Heart left ventricle (tissue), 16 donors: ENCODE measurements at regions of chr6 and their contacts with region 1.

Region 1: GRCh38 chr6:27388293-27389197 is at the start of gene ZNF391:
- DNase-seq: peak; percentile 54 to 83 (median 79)
- ATAC-seq: peak; percentile 83 to 97 (median 96)
- H3K4me3 ChIP-seq: peak within 1 kb of the TSS; percentile 7 to 94 (median 69)
- H3K27ac ChIP-seq: peak within 1 kb of the TSS in 11 of 12 donors; percentile 13 to 81 (median 67)
- H3K4me1 ChIP-seq: peaks cover 0 to 16% (median 7%) of the 10 kb centered on the region in 12 donors
- H3K27me3 ChIP-seq: peaks cover 0 to 3% (median 0%) of the 10 kb centered on the region in 9 donors
- CTCF ChIP-seq: no peak
- POLR2A ChIP-seq: peak in 1 of 2 donors; percentile 56
- total RNA-seq, gene ZNF391: 0.26 to 1.5 (median 0.69) TPM

Region 2: GRCh38 chr6:27251606-27252251 is 136.8 kb before region 1 on chr6:
- intact Hi-C with region 1: no loop called
- DNase-seq: peak in 2 of 5 donors; percentile 26 to 70
- ATAC-seq: peak in 3 of 4 donors; percentile 34 to 54 (median 49)
- H3K4me3 ChIP-seq: peak overlapping the region; percentile 15 to 56 (median 38)
- H3K27ac ChIP-seq: no peak overlapping the region
- H3K4me1 ChIP-seq: peaks cover 0 to 16% (median 5%) of the 10 kb centered on the region in 12 donors
- H3K27me3 ChIP-seq: peaks cover 22 to 99% (median 67%) of the 10 kb centered on the region in 9 donors
- CTCF ChIP-seq: peak in 1 of 12 donors; percentile 12
- POLR2A ChIP-seq: no peak

Region 3: GRCh38 chr6:27280064-27280539 is 108.4 kb before region 1 on chr6:
- intact Hi-C with region 1: no loop called
- DNase-seq: no peak
- ATAC-seq: no peak
- H3K4me3 ChIP-seq: no peak overlapping the region
- H3K27ac ChIP-seq: no peak overlapping the region
- H3K4me1 ChIP-seq: no peaks in the 10 kb centered on the region
- H3K27me3 ChIP-seq: peaks cover 34 to 100% (median 93%) of the 10 kb centered on the region in 9 donors
- CTCF ChIP-seq: no peak
- POLR2A ChIP-seq: no peak

Region 4: DNA sequence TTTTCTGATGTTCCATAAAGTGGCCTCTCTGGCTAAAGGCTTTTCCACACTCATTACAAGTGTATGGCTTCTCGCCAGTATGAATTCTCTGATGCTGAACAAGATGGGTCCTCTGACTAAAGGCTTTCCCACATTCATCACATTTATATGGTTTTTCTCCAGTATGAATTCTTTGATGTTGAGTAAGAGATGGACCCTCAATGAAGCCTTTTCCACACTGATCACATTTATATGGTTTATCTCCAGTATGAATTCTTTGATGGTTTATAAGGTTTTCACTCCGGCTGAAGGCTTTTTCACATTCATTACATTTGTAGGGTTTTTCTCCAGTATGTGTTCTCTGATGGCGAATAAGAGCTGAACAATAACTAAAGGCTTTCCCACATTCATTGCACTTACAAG is 64.0 kb after region 1 on chr6:
- intact Hi-C with region 1: loop called in 1 of 10 experiments (anchors 10 kb)
- DNase-seq: no peak
- ATAC-seq: no peak
- H3K4me3 ChIP-seq: no peak overlapping the region
- H3K27ac ChIP-seq: no peak overlapping the region
- H3K4me1 ChIP-seq: no peaks in the 10 kb centered on the region
- H3K27me3 ChIP-seq: no peaks in the 10 kb centered on the region
- CTCF ChIP-seq: no peak
- POLR2A ChIP-seq: no peak

Region 5: GRCh38 chr6:27472617-27473400 is 84.3 kb after region 1 on chr6 and contains the start of gene ZNF184:
- intact Hi-C with region 1: loop called in 1 of 10 experiments (anchors 5 kb)
- DNase-seq: peak; percentile 95 to 96 (median 96)
- ATAC-seq: peak; percentile 99 to 100 (median 100)
- H3K4me3 ChIP-seq: peak within 1 kb of the TSS; percentile 52 to 99 (median 86)
- H3K27ac ChIP-seq: peak within 1 kb of the TSS; percentile 34 to 92 (median 86)
- H3K4me1 ChIP-seq: peaks cover 0 to 37% (median 19%) of the 10 kb centered on the region in 12 donors
- H3K27me3 ChIP-seq: no peaks in the 10 kb centered on the region
- CTCF ChIP-seq: peak in 3 of 12 donors; percentile 2 to 29 (median 24)
- POLR2A ChIP-seq: peak in 1 of 2 donors; percentile 78
- total RNA-seq, gene ZNF184: 3.2 to 6.5 (median 4.0) TPM